ENCODE measurements at regions of chr3 and their contacts with region 1.

Region 1: DNA sequence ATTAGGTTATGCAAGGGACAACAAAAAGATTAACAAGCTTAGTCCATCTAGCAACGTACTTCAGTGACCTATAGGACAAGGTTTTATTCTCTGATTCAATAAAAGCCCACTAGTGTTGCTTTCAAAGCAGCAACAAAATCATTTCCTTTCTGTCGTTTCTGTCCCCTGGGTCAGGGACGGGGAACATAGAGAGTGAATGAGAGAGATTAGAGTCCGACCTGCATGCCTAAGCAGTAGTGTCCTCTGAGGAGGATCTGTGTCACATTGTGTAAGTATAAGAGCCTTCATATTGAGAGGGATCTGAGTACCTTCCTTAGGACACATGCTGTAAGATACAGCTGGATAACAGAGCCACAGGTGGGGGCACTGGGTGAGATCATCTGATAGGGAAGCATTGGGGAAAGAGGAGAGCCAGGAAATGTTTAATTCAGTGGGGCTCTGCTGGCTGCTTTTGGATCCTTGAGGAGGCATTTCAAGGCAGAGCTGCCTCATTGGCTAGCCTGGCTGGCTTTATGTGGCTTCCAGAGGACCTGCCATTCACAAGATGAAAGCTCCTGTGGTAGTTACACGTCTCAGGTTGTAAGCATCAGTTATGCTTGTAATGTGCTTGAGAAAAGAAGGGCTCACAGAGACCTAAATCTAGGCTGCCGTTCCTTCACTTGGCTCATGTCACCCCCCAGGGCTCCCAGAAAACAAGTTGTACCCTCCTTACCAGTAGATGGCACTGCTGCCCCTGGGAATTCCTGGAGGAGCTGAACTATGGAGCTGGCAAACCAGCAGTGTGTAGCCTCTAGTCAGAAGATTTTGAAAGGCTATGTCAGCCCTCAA is 2.7 kb downstream of the TMEM108 start:
- DNase-seq: peak; percentile 35 to 70 (median 53)
- ATAC-seq: peak; percentile 68
- H3K4me3 ChIP-seq: no peak overlapping the region
- H3K27ac ChIP-seq: no peak overlapping the region
- H3K4me1 ChIP-seq: peaks cover 5 to 16% of the 10 kb centered on the region in 2 experiments; a peak in 4 of 5 replicates
- H3K27me3 ChIP-seq: no peaks in the 10 kb centered on the region; a peak in 1 of 5 replicates
- CTCF ChIP-seq: peak; percentile 65 to 70 (median 69)
- EP300 ChIP-seq: no peak
- POLR2A ChIP-seq: no peak
- RAD21 ChIP-seq: peak; percentile 77

Region 2: GRCh38 chr3:132659365-132660051 is 381.4 kb before region 1 on chr3 and contains the start of gene ACAD11:
- CTCF ChIA-PET with region 1: no interaction called
- POLR2A ChIA-PET with region 1: no interaction called
- in situ Hi-C with region 1: no loop called
- intact Hi-C with region 1: loop called (anchors 10 kb)
- DNase-seq: peak; percentile 38 to 63 (median 52)
- ATAC-seq: peak; percentile 81
- H3K4me3 ChIP-seq: peak within 1 kb of the TSS; percentile 91
- H3K27ac ChIP-seq: peak within 1 kb of the TSS; percentile 91
- H3K4me1 ChIP-seq: peaks cover 0 to 9% of the 10 kb centered on the region in 2 experiments; a peak in 4 of 5 replicates
- H3K27me3 ChIP-seq: no peaks in the 10 kb centered on the region
- CTCF ChIP-seq: peak; percentile 56 to 76 (median 60)
- EP300 ChIP-seq: no peak
- POLR2A ChIP-seq: no peak
- RAD21 ChIP-seq: peak in 1 of 2 experiments; percentile 39; a peak in 2 of 4 replicates
- polyA plus RNA-seq, gene ACAD11: 1.3 to 2.1 TPM

Region 3: GRCh38 chr3:133276594-133276993 is 235.7 kb after region 1 on chr3:
- CTCF ChIA-PET with region 1: no interaction called
- POLR2A ChIA-PET with region 1: no interaction called
- in situ Hi-C with region 1: no loop called
- intact Hi-C with region 1: loop called (anchors 10 kb)
- DNase-seq: no peak
- ATAC-seq: no peak
- H3K4me3 ChIP-seq: no peak overlapping the region
- H3K27ac ChIP-seq: no peak overlapping the region
- H3K4me1 ChIP-seq: no peaks in the 10 kb centered on the region
- H3K27me3 ChIP-seq: no peaks in the 10 kb centered on the region
- CTCF ChIP-seq: no peak
- EP300 ChIP-seq: no peak
- POLR2A ChIP-seq: no peak
- RAD21 ChIP-seq: no peak

Region 4: DNA sequence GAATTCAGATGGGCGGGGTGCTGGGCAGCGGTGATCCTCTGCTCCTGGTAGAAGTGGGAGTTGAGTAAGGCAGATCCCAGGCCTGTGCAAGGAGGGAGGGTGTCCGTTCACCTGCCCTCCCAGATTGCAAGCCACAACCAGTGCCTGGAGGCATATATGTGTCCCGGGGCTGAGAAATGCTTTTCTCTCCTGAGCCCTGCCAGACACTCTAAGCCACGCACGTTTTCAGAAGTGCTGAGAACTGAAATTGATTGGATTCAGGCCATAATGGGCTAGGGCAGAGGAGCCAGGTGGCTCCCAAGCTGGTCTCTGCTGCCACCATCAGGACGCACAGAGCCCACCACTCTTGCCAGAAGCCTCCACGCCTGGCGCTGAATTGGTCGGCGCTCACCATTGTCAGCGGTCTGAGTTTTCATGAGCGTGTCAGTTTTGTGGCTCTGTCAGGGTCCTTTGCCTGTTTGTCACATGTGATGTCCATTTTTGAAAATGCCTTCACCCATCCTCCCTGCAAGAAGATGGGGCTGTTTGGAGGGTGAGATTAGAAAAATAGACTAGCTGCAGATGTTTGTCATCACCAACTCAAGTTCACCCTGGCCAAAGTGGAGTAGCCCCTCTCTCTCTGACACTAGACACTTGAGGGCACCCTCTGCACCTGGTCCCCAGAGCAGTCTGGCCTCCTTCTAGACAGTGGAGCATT is 343.6 kb after region 1 on chr3:
- CTCF ChIA-PET with region 1: interaction called, 5 read pairs
- POLR2A ChIA-PET with region 1: no interaction called
- in situ Hi-C with region 1: loop called (anchors 25 kb)
- intact Hi-C with region 1: loop called (anchors 2 kb)
- DNase-seq: peak; percentile 29 to 41 (median 33)
- ATAC-seq: peak; percentile 93
- H3K4me3 ChIP-seq: no peak overlapping the region
- H3K27ac ChIP-seq: no peak overlapping the region
- H3K4me1 ChIP-seq: no peaks in the 10 kb centered on the region; a peak in 1 of 5 replicates
- H3K27me3 ChIP-seq: no peaks in the 10 kb centered on the region
- CTCF ChIP-seq: peak; percentile 58 to 68 (median 66)
- EP300 ChIP-seq: no peak
- POLR2A ChIP-seq: no peak
- RAD21 ChIP-seq: peak; percentile 63 to 75

Region 5: DNA sequence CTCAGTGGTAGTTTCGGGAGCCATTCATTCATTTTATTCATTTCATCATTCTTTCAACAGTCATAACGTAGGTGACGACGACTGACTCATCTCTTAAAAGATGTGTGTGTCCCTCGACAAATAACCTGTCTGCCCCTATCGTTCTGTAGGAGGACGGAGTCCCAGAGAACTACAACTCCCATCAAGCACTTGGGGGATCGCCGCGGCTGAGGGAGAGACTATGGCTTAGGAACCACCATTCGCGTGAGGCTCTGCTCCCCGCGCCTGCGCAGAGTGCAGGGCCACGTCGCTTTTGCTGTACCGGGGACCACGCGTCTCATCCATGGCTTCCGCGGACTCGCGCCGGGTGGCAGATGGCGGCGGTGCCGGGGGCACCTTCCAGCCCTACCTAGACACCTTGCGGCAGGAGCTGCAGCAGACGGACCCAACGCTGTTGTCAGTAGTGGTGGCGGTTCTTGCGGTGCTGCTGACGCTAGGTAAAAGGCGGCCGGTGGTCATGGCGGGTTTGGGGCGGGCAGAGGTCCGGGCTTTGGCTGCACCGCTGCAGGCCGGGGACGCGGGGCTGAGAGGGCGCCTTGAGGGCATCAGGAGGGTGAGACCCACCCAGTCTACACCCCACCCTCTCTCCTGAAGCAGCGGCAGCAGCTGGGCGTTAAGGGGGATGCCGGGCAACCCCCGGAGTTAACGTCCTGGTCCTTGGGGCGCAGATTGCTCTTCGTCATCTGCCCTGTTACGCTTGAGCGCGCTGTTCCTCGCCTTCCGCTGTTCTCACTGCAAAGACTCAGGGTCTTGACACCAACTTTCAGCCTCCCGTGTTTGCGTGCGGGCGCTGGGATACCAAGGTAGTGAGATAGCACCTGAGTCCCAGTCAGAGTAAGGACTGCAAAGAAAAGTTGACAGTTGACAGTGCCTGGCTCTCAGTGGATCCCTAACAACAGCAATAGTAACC is 764.9 kb after region 1 on chr3 and contains the start of gene SRPRB:
- CTCF ChIA-PET with region 1: no interaction called
- POLR2A ChIA-PET with region 1: no interaction called
- in situ Hi-C with region 1: loop called (anchors 25 kb)
- intact Hi-C with region 1: no loop called
- DNase-seq: peak; percentile 90 to 94 (median 92)
- ATAC-seq: peak; percentile 99
- H3K4me3 ChIP-seq: peak within 1 kb of the TSS; percentile 89
- H3K27ac ChIP-seq: peak within 1 kb of the TSS; percentile 80
- H3K4me1 ChIP-seq: no peaks in the 10 kb centered on the region; a peak in 1 of 5 replicates
- H3K27me3 ChIP-seq: no peaks in the 10 kb centered on the region
- CTCF ChIP-seq: no peak
- EP300 ChIP-seq: no peak
- POLR2A ChIP-seq: peak; percentile 92
- RAD21 ChIP-seq: no peak
- polyA plus RNA-seq, gene SRPRB: 29.5 to 37.5 TPM

Measured in K562 (cell line).